MCF 10A (cell line): ENCODE measurements at regions of chr17 and their contacts with region 1.

Region 1: DNA sequence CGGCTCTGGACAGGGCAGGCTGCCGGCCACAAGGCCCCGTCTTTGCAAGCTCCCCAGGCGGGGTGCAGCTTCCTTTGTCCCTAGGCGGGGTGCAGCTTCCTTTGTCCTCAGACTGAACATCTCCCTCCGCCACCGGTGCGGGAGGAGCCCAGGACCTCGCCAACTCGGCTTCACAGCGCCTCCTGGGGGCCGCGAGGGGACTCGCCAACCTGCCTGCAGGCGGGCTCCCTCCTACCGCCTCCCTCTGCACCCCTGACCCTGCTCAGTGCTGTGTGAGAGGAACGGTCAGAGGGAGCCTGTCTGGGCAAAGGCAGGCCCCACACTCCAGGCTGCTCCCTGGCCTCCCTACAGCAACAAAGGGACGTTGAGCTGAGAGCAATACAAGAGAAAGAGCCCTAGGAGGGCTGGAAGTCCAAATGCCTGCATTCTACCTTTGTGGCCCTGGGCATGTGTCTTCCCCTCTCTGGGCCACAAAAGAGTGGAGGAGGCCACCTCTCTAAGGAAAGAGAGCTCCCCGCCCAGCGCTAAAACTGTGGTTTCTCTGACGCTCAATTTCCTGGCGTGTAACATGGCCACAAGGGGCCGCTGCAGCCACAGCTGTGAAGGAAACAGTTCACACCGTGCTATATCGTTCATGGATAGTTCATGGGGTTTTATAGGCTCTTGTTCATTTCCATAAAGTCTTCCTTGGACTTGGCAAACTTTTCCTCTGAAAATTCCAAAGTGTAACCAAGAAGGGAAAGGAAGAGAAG is 20.9 kb upstream of the KRT19 start:
- DNase-seq: peak; percentile 93
- H3K4me3 Mint-ChIP-seq: peak overlapping the region; percentile 47
- H3K27ac Mint-ChIP-seq: peak overlapping the region; percentile 78
- H3K4me1 Mint-ChIP-seq: peaks cover 44% of the 10 kb centered on the region
- H3K27me3 Mint-ChIP-seq: no peaks in the 10 kb centered on the region
- CTCF ChIP-seq: peak; percentile 63

Region 2: GRCh38 chr17:40854159-40854814 is 694.7 kb before region 1 on chr17:
- CTCF ChIA-PET with region 1: interaction called, 69 read pairs
- POLR2A ChIA-PET with region 1: interaction called, 26 read pairs
- intact Hi-C with region 1: loop called (anchors 2 kb)
- DNase-seq: peak; percentile 87
- H3K4me3 Mint-ChIP-seq: no peak overlapping the region
- H3K27ac Mint-ChIP-seq: peak overlapping the region; percentile 95
- H3K4me1 Mint-ChIP-seq: peaks cover 38% of the 10 kb centered on the region
- H3K27me3 Mint-ChIP-seq: no peaks in the 10 kb centered on the region
- CTCF ChIP-seq: no peak

Region 3: GRCh38 chr17:41322094-41322902 is 226.7 kb before region 1 on chr17:
- CTCF ChIA-PET with region 1: interaction called, 22 read pairs
- POLR2A ChIA-PET with region 1: interaction called, 8 read pairs
- intact Hi-C with region 1: loop called (anchors 2 kb)
- DNase-seq: peak; percentile 61
- H3K4me3 Mint-ChIP-seq: no peak overlapping the region
- H3K27ac Mint-ChIP-seq: no peak overlapping the region
- H3K4me1 Mint-ChIP-seq: no peaks in the 10 kb centered on the region
- H3K27me3 Mint-ChIP-seq: no peaks in the 10 kb centered on the region
- CTCF ChIP-seq: peak; percentile 76

Region 4: DNA sequence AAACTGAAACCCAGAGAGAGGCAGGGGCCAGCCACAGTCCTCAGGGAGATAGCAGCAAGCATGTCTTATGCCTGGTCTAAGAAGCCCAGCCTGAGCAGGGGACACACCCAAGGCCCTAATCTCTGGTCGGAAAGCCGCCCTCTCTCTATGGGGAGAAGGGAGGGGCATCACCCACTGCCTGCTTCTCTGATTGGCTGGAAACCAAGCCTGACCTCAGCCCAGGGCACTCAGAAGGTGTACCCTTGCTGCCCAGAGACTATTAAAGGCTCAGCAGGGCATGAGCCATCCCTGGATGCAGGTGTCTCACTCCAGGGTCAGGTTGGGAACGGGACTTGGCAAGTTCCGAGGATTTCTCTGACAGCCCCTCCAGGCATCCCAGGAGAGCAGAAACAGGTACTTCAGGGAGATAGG is 37.9 kb before region 1 on chr17:
- CTCF ChIA-PET with region 1: interaction called, 80 read pairs
- POLR2A ChIA-PET with region 1: interaction called, 83 read pairs
- intact Hi-C with region 1: no loop called
- DNase-seq: no peak
- H3K4me3 Mint-ChIP-seq: no peak overlapping the region
- H3K27ac Mint-ChIP-seq: no peak overlapping the region
- H3K4me1 Mint-ChIP-seq: peaks cover 13% of the 10 kb centered on the region
- H3K27me3 Mint-ChIP-seq: no peaks in the 10 kb centered on the region
- CTCF ChIP-seq: no peak

Region 5: GRCh38 chr17:41567317-41567716 is 18.3 kb after region 1 on chr17:
- CTCF ChIA-PET with region 1: interaction called, 34 read pairs
- POLR2A ChIA-PET with region 1: interaction called, 3 read pairs
- intact Hi-C with region 1: no loop called
- DNase-seq: no peak
- H3K4me3 Mint-ChIP-seq: no peak overlapping the region
- H3K27ac Mint-ChIP-seq: no peak overlapping the region
- H3K4me1 Mint-ChIP-seq: no peaks in the 10 kb centered on the region
- H3K27me3 Mint-ChIP-seq: peaks cover 34% of the 10 kb centered on the region
- CTCF ChIP-seq: no peak

Region 6: GRCh38 chr17:41648411-41649195 is 99.6 kb after region 1 on chr17:
- CTCF ChIA-PET with region 1: interaction called, 218 read pairs
- POLR2A ChIA-PET with region 1: interaction called, 101 read pairs
- intact Hi-C with region 1: loop called (anchors 1 kb)
- DNase-seq: peak; percentile 87
- H3K4me3 Mint-ChIP-seq: peak overlapping the region; percentile 22
- H3K27ac Mint-ChIP-seq: peak overlapping the region; percentile 93
- H3K4me1 Mint-ChIP-seq: peaks cover 34% of the 10 kb centered on the region
- H3K27me3 Mint-ChIP-seq: no peaks in the 10 kb centered on the region
- CTCF ChIP-seq: peak; percentile 88